MCF 10A (cell line): ENCODE measurements at regions of chr18 and their contacts with region 1.

Region 1: GRCh38 chr18:31241900-31242409 is 76.0 kb upstream of the DSG1 start:
- DNase-seq: peak; percentile 96
- H3K4me3 Mint-ChIP-seq: peak overlapping the region; percentile 41
- H3K27ac Mint-ChIP-seq: peak overlapping the region; percentile 84
- H3K4me1 Mint-ChIP-seq: peaks cover 36% of the 10 kb centered on the region
- H3K27me3 Mint-ChIP-seq: no peaks in the 10 kb centered on the region
- CTCF ChIP-seq: peak; percentile 58

Region 2: DNA sequence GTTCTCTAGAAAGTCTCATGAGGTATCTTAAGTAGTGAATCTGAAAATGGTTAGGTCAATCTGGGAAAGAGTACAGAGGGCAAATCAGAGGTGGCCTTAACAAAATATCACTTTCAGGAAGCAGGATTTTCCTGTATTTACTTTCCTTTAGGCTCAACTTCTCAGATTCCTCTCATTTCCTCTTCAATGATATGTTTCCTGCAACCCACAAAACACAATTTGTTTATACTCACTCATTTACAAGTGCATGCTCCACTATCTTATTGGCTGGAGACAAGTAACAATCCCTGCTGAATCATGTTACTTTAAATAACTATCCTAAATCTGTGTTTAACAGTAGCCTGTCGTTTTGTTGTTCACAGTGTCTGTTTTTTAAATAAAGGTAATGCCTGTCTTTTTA is 427.5 kb before region 1 on chr18:
- CTCF ChIA-PET with region 1: no interaction called
- POLR2A ChIA-PET with region 1: no interaction called
- intact Hi-C with region 1: no loop called
- DNase-seq: no peak
- H3K4me3 Mint-ChIP-seq: no peak overlapping the region
- H3K27ac Mint-ChIP-seq: no peak overlapping the region
- H3K4me1 Mint-ChIP-seq: no peaks in the 10 kb centered on the region
- H3K27me3 Mint-ChIP-seq: peaks cover 20% of the 10 kb centered on the region
- CTCF ChIP-seq: no peak

Region 3: GRCh38 chr18:30987450-30988241 is 254.3 kb before region 1 on chr18:
- CTCF ChIA-PET with region 1: no interaction called
- POLR2A ChIA-PET with region 1: no interaction called
- intact Hi-C with region 1: loop called (anchors 10 kb)
- DNase-seq: peak; percentile 98
- H3K4me3 Mint-ChIP-seq: peak overlapping the region; percentile 47
- H3K27ac Mint-ChIP-seq: peak overlapping the region; percentile 91
- H3K4me1 Mint-ChIP-seq: peaks cover 16% of the 10 kb centered on the region
- H3K27me3 Mint-ChIP-seq: no peaks in the 10 kb centered on the region
- CTCF ChIP-seq: no peak

Region 4: DNA sequence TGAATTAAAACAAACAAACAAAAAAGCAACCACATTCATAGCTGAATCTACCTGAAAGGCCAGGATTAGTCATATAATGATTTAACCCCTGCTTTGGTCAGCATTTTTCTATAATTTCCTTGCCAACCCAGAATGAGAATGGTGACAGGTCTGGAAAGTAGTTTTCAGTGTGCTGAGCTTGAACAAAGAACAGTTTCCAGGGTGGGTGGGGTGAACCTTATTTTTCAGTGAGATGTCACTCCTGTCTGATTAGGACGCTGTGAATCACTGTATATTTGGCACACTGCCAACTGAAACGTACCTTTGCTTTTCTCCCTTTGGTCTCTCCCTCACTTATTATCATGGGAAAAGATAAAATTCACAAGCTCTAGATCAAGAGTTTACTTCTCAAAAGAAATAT is 44.3 kb before region 1 on chr18:
- CTCF ChIA-PET with region 1: interaction called, 11 read pairs
- POLR2A ChIA-PET with region 1: interaction called, 62 read pairs
- intact Hi-C with region 1: no loop called
- DNase-seq: peak; percentile 69
- H3K4me3 Mint-ChIP-seq: no peak overlapping the region
- H3K27ac Mint-ChIP-seq: no peak overlapping the region
- H3K4me1 Mint-ChIP-seq: peaks cover 20% of the 10 kb centered on the region
- H3K27me3 Mint-ChIP-seq: no peaks in the 10 kb centered on the region
- CTCF ChIP-seq: no peak

Region 5: GRCh38 chr18:31230495-31230894 is 11.5 kb before region 1 on chr18:
- CTCF ChIA-PET with region 1: interaction called, 4 read pairs
- POLR2A ChIA-PET with region 1: interaction called, 73 read pairs
- intact Hi-C with region 1: no loop called
- DNase-seq: peak; percentile 86
- H3K4me3 Mint-ChIP-seq: no peak overlapping the region
- H3K27ac Mint-ChIP-seq: peak overlapping the region; percentile 54
- H3K4me1 Mint-ChIP-seq: peaks cover 24% of the 10 kb centered on the region
- H3K27me3 Mint-ChIP-seq: no peaks in the 10 kb centered on the region
- CTCF ChIP-seq: no peak

Region 6: GRCh38 chr18:31261792-31262582 is 20.0 kb after region 1 on chr18:
- CTCF ChIA-PET with region 1: interaction called, 5 read pairs
- POLR2A ChIA-PET with region 1: interaction called, 160 read pairs
- intact Hi-C with region 1: no loop called
- DNase-seq: no peak
- H3K4me3 Mint-ChIP-seq: no peak overlapping the region
- H3K27ac Mint-ChIP-seq: no peak overlapping the region
- H3K4me1 Mint-ChIP-seq: no peaks in the 10 kb centered on the region
- H3K27me3 Mint-ChIP-seq: no peaks in the 10 kb centered on the region
- CTCF ChIP-seq: no peak

Region 7: GRCh38 chr18:31274915-31275314 is 33.0 kb after region 1 on chr18:
- CTCF ChIA-PET with region 1: interaction called, 6 read pairs
- POLR2A ChIA-PET with region 1: interaction called, 89 read pairs
- intact Hi-C with region 1: no loop called
- DNase-seq: peak; percentile 99
- H3K4me3 Mint-ChIP-seq: peak overlapping the region; percentile 59
- H3K27ac Mint-ChIP-seq: peak overlapping the region; percentile 97
- H3K4me1 Mint-ChIP-seq: peaks cover 34% of the 10 kb centered on the region
- H3K27me3 Mint-ChIP-seq: no peaks in the 10 kb centered on the region
- CTCF ChIP-seq: no peak

Region 8: DNA sequence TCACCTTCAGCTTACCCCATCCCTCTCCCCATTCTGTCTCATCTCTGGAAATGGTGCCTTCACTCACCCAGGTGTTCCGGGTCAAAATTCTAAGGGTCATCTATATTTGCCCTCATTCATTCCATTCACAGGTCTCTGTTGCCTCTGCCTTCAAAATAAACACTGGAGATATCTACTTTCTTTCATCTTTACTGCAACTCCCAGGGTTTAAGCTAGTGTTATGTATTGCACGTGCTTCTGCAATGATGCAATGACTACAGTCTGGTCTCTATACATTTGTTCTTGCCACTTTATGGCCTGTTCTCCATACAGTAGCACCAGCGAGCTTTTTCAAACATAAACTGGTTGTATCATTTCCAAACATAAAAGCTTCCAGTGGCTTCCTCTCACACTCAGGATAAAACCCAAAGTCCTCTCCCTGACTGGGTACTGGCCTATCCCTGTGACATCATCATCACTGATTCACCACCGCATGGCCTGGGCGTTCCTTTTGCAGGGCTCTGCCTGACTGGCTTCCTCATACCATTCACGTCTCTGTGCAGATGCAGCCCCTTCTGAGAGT is 270.3 kb after region 1 on chr18:
- CTCF ChIA-PET with region 1: interaction called, 3 read pairs
- POLR2A ChIA-PET with region 1: interaction called, 15 read pairs
- intact Hi-C with region 1: no loop called
- DNase-seq: peak; percentile 87
- H3K4me3 Mint-ChIP-seq: peak overlapping the region; percentile 59
- H3K27ac Mint-ChIP-seq: peak overlapping the region; percentile 95
- H3K4me1 Mint-ChIP-seq: peaks cover 51% of the 10 kb centered on the region
- H3K27me3 Mint-ChIP-seq: no peaks in the 10 kb centered on the region
- CTCF ChIP-seq: no peak